Activated B cell treated with CpG ODN at 0.5 μM for 24 hours (primary cell): ENCODE measurements at regions of chr12 and their contacts with region 1.

Region 1: GRCh38 chr12:123633379-123634141 is at the starts of genes EIF2B1 and GTF2H3:
- DNase-seq: peak; percentile 96
- ATAC-seq: peak; percentile 98
- H3K4me3 Mint-ChIP-seq: peak within 1 kb of the TSS; percentile 96
- H3K27ac Mint-ChIP-seq: peak within 1 kb of the TSS; percentile 93
- H3K4me1 Mint-ChIP-seq: peaks cover 24% of the 10 kb centered on the region
- H3K27me3 Mint-ChIP-seq: no peaks in the 10 kb centered on the region
- CTCF ChIP-seq: no peak
- total RNA-seq, gene EIF2B1: 67.3 and 79.7 TPM in 2 replicates
- total RNA-seq, gene GTF2H3: 33.8 and 36.2 TPM in 2 replicates

Region 2: DNA sequence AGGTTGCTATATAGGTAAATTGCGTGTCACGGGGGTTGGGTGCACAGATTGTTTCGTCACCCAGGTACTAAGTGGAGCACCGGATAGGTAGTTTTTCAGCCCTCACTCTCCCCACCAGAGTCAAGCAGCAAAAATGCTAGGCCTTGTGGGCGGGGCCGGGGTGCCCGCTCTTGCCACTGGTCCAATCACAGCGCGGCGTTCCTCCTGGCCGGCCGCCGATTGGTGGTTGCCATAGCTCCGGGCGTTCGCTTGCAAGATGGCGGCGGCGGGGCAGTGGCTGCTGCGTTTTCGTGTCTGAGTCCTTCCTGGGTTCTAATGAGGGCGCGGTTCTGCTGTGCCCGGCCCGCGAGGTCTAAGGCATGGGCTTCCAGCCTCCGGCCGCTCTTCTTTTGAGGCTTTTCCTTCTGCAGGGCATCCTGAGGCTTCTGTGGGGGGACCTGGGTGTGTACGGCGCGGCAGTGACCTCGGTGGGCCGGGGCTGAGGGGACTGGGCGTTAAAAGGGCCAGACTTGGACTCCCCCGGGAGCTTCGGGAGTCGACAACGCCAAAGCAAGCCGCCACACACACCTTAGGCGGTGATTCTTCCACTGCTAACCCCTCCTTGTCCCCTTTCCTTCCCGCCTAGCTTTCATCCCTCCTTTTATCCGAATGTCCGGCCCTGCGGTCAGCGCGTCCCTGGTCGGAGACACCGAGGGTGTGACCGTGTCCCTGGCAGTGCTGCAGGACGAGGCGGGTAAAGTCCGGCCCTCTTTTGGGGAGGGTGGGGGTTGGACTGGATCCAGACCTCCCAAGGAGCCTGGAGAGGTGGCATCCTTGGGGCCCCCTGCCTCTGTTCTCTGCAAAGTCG is 37.5 kb after region 1 on chr12 and contains the start of gene TCTN2:
- CTCF ChIA-PET with region 1: no interaction called
- POLR2A ChIA-PET with region 1: interaction called, 3 read pairs
- intact Hi-C with region 1: loop called (anchors 1 kb)
- DNase-seq: peak; percentile 90
- ATAC-seq: peak; percentile 100
- H3K4me3 Mint-ChIP-seq: peak within 1 kb of the TSS; percentile 91
- H3K27ac Mint-ChIP-seq: peak within 1 kb of the TSS; percentile 35
- H3K4me1 Mint-ChIP-seq: peaks cover 11% of the 10 kb centered on the region
- H3K27me3 Mint-ChIP-seq: no peaks in the 10 kb centered on the region
- CTCF ChIP-seq: no peak
- total RNA-seq, gene TCTN2: 10.3 and 11.9 TPM in 2 replicates

Region 3: DNA sequence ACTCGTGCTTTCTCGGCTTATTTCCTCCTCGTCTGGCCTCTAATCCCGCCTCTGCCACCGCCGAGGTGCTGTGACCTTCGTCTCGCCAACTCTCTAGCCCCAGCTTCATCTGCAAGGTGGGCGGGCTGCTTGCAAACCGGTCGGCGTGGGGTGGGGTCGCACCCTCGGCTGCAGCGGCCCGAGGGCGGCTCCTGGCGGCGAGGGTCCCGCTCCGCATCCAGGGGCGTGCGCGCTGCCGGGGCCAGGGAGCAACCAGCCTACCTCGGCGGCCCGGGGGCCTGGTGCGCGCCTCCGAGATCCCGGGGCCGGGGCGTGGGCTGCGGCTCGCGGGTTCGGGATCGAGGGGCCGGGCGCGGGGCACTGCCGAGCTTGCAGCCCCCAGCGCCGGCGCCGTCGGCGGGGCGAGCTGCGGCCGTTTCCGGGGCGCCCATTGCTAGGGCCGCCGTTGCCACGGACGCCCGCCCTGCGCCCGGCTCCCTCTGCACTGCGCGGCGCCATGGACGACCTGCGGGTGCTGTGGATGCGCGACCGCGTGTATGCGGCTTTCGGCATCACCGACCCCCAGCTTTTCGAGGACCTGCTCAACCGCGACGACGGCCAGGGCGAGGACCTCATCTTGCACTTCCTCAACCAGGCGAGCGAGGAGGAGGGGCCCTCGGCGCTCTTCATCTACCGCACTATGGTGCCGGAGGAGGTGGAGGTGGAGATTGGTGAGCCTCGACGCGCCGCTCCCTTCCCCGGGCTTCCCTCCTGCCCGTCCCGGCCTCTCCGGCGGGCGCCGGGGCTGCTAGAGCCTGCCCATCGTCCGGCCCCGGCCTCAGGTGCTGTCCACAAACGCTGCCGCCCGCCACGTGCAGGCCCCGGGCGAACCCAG is 128.5 kb after region 1 on chr12 and contains the start of gene DNAH10:
- CTCF ChIA-PET with region 1: interaction called, 3 read pairs
- POLR2A ChIA-PET with region 1: no interaction called
- intact Hi-C with region 1: loop called (anchors 1 kb)
- DNase-seq: peak; percentile 61
- ATAC-seq: peak; percentile 82
- H3K4me3 Mint-ChIP-seq: peak within 1 kb of the TSS; percentile 91
- H3K27ac Mint-ChIP-seq: peak within 1 kb of the TSS; percentile 77
- H3K4me1 Mint-ChIP-seq: peaks cover 14% of the 10 kb centered on the region
- H3K27me3 Mint-ChIP-seq: no peaks in the 10 kb centered on the region
- CTCF ChIP-seq: no peak
- total RNA-seq, gene DNAH10: 0.32 and 0.51 TPM in 2 replicates